ENCODE measurements at regions of chr17 and their contacts with region 1.

Region 1: DNA sequence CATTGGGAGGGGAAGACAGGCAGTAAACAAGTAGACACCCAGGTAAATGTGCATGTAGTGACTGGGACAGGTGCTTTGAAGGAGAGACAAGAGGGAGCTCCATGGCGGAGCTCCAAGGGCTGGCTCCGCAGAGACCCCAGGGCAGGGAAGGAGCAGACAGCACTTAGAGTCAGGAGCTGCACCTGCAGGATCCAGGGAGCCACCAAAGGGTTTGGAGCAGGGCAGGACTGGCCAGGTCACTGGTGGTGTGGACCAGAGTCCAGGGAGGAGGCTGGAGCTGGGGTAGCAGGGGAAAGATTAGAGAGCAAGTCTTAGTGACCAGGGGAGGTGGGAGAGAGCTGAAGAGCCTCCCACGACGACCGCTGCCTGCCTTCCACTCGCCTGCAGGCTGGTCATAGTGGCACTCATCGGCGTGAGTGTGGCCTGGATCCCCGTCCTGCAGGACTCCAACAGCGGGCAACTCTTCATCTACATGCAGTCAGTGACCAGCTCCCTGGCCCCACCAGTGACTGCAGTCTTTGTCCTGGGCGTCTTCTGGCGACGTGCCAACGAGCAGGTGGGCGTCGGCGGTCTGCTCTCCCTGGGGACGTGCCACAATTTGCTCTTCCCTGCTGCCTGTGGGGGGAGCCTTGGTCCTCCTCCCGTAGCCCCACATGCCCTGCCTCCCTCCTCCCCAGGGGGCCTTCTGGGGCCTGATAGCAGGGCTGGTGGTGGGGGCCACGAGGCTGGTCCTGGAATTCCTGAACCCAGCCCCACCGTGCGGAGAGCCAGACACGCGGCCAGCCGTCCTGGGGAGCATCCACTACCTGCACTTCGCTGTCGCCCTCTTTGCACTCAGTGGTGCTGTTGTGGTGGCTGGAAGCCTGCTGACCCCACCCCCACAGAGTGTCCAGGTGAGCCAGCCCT is 14.7 kb upstream of the FAM83G start:
- DNase-seq: no peak
- ATAC-seq: no peak
- H3K4me3 Mint-ChIP-seq: no peak overlapping the region
- H3K27ac Mint-ChIP-seq: no peak overlapping the region
- H3K4me1 Mint-ChIP-seq: peaks cover 18% of the 10 kb centered on the region
- H3K27me3 Mint-ChIP-seq: no peaks in the 10 kb centered on the region
- CTCF ChIP-seq: no peak

Region 2: GRCh38 chr17:18916816-18917500 is 102.3 kb before region 1 on chr17:
- CTCF ChIA-PET with region 1: no interaction called
- POLR2A ChIA-PET with region 1: no interaction called
- intact Hi-C with region 1: loop called (anchors 10 kb)
- DNase-seq: no peak
- ATAC-seq: peak; percentile 57
- H3K4me3 Mint-ChIP-seq: peak overlapping the region; percentile 33
- H3K27ac Mint-ChIP-seq: peak overlapping the region; percentile 80
- H3K4me1 Mint-ChIP-seq: peaks cover 53% of the 10 kb centered on the region
- H3K27me3 Mint-ChIP-seq: no peaks in the 10 kb centered on the region
- CTCF ChIP-seq: no peak

Region 3: GRCh38 chr17:18960803-18961511 is 58.3 kb before region 1 on chr17:
- CTCF ChIA-PET with region 1: interaction called, 7 read pairs
- POLR2A ChIA-PET with region 1: no interaction called
- intact Hi-C with region 1: loop called (anchors 10 kb)
- DNase-seq: peak; percentile 82
- ATAC-seq: peak; percentile 97
- H3K4me3 Mint-ChIP-seq: no peak overlapping the region
- H3K27ac Mint-ChIP-seq: no peak overlapping the region
- H3K4me1 Mint-ChIP-seq: peaks cover 8% of the 10 kb centered on the region
- H3K27me3 Mint-ChIP-seq: no peaks in the 10 kb centered on the region
- CTCF ChIP-seq: peak; percentile 67

Measured in activated B cell treated with CpG ODN at 0.5 μM for 24 hours (primary cell).